Body of pancreas (tissue), 4 donors: ENCODE measurements at regions of chr2 and their contacts with region 1.

Region 1: GRCh38 chr2:38740851-38741731 is 10.1 kb downstream of the SRSF7 start:
- DNase-seq: peak in 1 of 4 donors; percentile 38
- ATAC-seq: peak; percentile 55
- H3K4me3 ChIP-seq: no peak overlapping the region
- H3K27ac ChIP-seq: peak overlapping the region in 1 of 4 donors; percentile 22
- H3K4me1 ChIP-seq: peaks cover 10% of the 10 kb centered on the region
- H3K27me3 ChIP-seq: no peaks in the 10 kb centered on the region
- CTCF ChIP-seq: peak; percentile 32 to 78 (median 69)
- POLR2A ChIP-seq: no peak

Region 2: GRCh38 chr2:38505779-38506178 is 235.3 kb before region 1 on chr2:
- intact Hi-C with region 1: no loop called
- DNase-seq: peak in 3 of 4 donors; percentile 30 to 63 (median 48)
- ATAC-seq: no peak
- H3K4me3 ChIP-seq: no peak overlapping the region
- H3K27ac ChIP-seq: no peak overlapping the region
- H3K4me1 ChIP-seq: no peaks in the 10 kb centered on the region
- H3K27me3 ChIP-seq: no peaks in the 10 kb centered on the region
- CTCF ChIP-seq: no peak
- POLR2A ChIP-seq: no peak

Region 3: GRCh38 chr2:38535744-38536506 is 205.2 kb before region 1 on chr2:
- intact Hi-C with region 1: loop called (anchors 10 kb)
- DNase-seq: peak; percentile 78 to 86 (median 81)
- ATAC-seq: peak; percentile 93
- H3K4me3 ChIP-seq: peak overlapping the region in 1 of 2 donors; percentile 18
- H3K27ac ChIP-seq: no peak overlapping the region
- H3K4me1 ChIP-seq: peaks cover 12% of the 10 kb centered on the region
- H3K27me3 ChIP-seq: no peaks in the 10 kb centered on the region
- CTCF ChIP-seq: peak; percentile 78 to 92 (median 88)
- POLR2A ChIP-seq: no peak